CD8-positive, alpha-beta T cell (primary cell): ENCODE measurements at regions of chr9 and their contacts with region 1.

Region 1: GRCh38 chr9:35079426-35080341 is at the start of gene FANCG:
- DNase-seq: peak; percentile 30 to 88 (median 73)
- ATAC-seq: peak; percentile 92
- H3K4me3 ChIP-seq: peak within 1 kb of the TSS; percentile 65 to 81
- H3K4me3 Mint-ChIP-seq: peak within 1 kb of the TSS; percentile 92
- H3K27ac ChIP-seq: peak within 1 kb of the TSS; percentile 42 to 49
- H3K27ac Mint-ChIP-seq: peak within 1 kb of the TSS; percentile 84
- H3K4me1 ChIP-seq: peaks cover 15% of the 10 kb centered on the region
- H3K4me1 Mint-ChIP-seq: peaks cover 21% of the 10 kb centered on the region
- H3K27me3 ChIP-seq: no peaks in the 10 kb centered on the region
- H3K27me3 Mint-ChIP-seq: no peaks in the 10 kb centered on the region
- CTCF ChIP-seq: no peak
- total RNA-seq, gene FANCG: 15.2 to 19.4 TPM

Region 2: GRCh38 chr9:34197756-34198711 is 881.6 kb before region 1 on chr9:
- CTCF ChIA-PET with region 1: no interaction called
- POLR2A ChIA-PET with region 1: no interaction called
- intact Hi-C with region 1: no loop called
- DNase-seq: no peak
- ATAC-seq: peak; percentile 25
- H3K4me3 ChIP-seq: no peak overlapping the region
- H3K4me3 Mint-ChIP-seq: no peak overlapping the region
- H3K27ac ChIP-seq: no peak overlapping the region
- H3K27ac Mint-ChIP-seq: peak overlapping the region; percentile 22
- H3K4me1 ChIP-seq: peaks cover 14% of the 10 kb centered on the region
- H3K4me1 Mint-ChIP-seq: peaks cover 53% of the 10 kb centered on the region
- H3K27me3 ChIP-seq: no peaks in the 10 kb centered on the region
- H3K27me3 Mint-ChIP-seq: no peaks in the 10 kb centered on the region
- CTCF ChIP-seq: no peak

Region 3: DNA sequence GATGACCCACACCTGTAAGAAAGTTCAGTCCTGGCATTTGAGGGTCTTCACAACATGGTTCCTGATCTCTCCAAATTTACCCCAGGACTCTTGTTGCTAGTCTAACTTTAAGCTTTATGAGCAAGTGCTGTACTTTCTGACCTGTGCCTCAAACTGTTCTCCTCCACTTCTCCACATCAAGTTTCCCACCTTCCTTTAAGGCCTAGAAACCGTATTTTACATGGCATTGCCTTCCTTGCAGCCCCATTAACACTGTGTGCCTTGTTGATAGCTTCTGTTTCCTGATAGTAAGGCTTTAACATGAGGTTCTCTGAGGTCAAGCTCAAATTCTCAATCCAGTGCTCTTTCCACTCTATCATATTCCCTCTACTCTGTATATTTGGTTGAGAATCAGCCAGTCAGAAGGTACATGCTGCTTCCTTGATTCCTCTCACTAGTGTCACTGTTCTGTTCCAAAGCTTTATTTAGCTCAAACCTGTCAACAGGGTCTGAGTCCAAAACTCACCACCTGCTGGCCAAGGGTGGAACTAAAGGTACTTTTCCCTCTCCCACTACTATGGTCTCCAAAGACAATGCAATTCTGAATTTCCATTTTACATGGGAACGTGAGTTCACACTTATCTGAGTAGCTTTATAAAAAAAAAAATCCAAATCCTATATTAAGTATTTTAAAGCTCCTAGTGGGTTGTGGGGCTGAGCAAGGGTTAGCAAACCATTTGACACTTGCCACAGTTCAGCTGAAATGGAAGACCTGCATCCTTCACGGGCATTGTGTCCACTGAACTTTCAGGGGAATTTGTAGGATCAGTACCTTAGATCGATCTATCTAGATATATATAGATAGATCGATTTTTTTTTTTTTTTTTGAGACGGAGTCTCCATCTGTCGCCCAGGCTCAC is 28.4 kb before region 1 on chr9:
- CTCF ChIA-PET with region 1: interaction called, 11 read pairs
- POLR2A ChIA-PET with region 1: no interaction called
- intact Hi-C with region 1: no loop called
- DNase-seq: peak in 8 of 9 experiments; percentile 19 to 65 (median 48)
- ATAC-seq: peak; percentile 84
- H3K4me3 ChIP-seq: no peak overlapping the region
- H3K4me3 Mint-ChIP-seq: no peak overlapping the region
- H3K27ac ChIP-seq: no peak overlapping the region
- H3K27ac Mint-ChIP-seq: peak overlapping the region; percentile 15
- H3K4me1 ChIP-seq: no peaks in the 10 kb centered on the region
- H3K4me1 Mint-ChIP-seq: peaks cover 4% of the 10 kb centered on the region
- H3K27me3 ChIP-seq: no peaks in the 10 kb centered on the region
- H3K27me3 Mint-ChIP-seq: no peaks in the 10 kb centered on the region
- CTCF ChIP-seq: peak; percentile 78

Region 4: DNA sequence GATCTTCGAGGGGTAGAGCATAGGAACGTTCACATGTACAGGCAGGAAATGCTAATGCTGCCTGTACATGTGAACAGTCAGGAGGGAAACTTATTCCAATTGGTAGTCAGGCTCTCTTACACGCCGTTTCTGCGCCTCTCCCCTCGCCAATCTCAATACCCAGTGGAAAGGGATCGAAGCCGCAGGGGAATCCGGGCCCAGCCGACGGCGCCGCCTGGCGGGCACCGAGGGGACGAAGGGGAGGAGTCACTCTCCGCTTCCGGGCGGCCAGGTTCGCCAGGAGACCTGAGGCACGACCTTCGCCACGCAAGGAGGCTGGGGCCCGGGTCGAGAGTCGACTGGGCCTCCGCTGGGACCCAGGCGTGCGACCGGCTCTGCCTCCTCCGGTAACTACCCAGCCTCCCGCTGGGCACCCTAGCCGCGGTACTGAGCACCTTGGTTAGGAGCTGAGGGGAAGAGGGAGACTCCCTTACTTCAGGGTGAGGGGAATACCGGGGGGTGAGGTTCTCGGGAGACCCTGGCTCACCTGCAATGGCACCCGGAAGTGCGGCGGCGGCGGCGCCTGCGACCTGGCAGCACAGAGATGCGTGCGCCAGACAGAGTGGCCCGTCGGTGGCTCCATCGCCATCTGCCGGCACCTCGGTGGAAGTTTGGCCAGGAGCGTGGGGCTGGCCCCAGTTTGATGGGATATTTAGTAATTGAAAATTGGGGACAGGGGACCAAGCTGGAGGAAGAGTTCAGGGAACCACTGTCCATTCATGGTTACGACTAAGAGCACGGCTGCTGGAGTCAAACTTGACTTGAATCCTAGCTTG is 16.6 kb after region 1 on chr9 and contains the start of gene PIGO:
- CTCF ChIA-PET with region 1: interaction called, 147 read pairs
- POLR2A ChIA-PET with region 1: interaction called, 23 read pairs
- intact Hi-C with region 1: loop called in 1 of 2 experiments (anchors 1 kb)
- DNase-seq: peak; percentile 78 to 94 (median 89)
- ATAC-seq: peak; percentile 90
- H3K4me3 ChIP-seq: peak within 1 kb of the TSS; percentile 95 to 99
- H3K4me3 Mint-ChIP-seq: peak within 1 kb of the TSS; percentile 88
- H3K27ac ChIP-seq: peak within 1 kb of the TSS; percentile 95 to 100
- H3K27ac Mint-ChIP-seq: peak within 1 kb of the TSS; percentile 95
- H3K4me1 ChIP-seq: peaks cover 24% of the 10 kb centered on the region
- H3K4me1 Mint-ChIP-seq: peaks cover 32% of the 10 kb centered on the region
- H3K27me3 ChIP-seq: no peaks in the 10 kb centered on the region
- H3K27me3 Mint-ChIP-seq: no peaks in the 10 kb centered on the region
- CTCF ChIP-seq: peak; percentile 75
- total RNA-seq, gene PIGO: 15.1 to 16.4 TPM

Region 5: GRCh38 chr9:35102926-35103659 is 23.4 kb after region 1 on chr9 and contains the start of gene STOML2:
- CTCF ChIA-PET with region 1: interaction called, 147 read pairs
- POLR2A ChIA-PET with region 1: interaction called, 23 read pairs
- intact Hi-C with region 1: loop called in 1 of 2 experiments (anchors 1 kb)
- DNase-seq: peak; percentile 83 to 97 (median 93)
- ATAC-seq: peak; percentile 96
- H3K4me3 ChIP-seq: peak within 1 kb of the TSS; percentile 78 to 95
- H3K4me3 Mint-ChIP-seq: peak within 1 kb of the TSS; percentile 89
- H3K27ac ChIP-seq: peak within 1 kb of the TSS; percentile 79 to 92
- H3K27ac Mint-ChIP-seq: peak within 1 kb of the TSS; percentile 90
- H3K4me1 ChIP-seq: peaks cover 14% of the 10 kb centered on the region
- H3K4me1 Mint-ChIP-seq: peaks cover 27% of the 10 kb centered on the region
- H3K27me3 ChIP-seq: no peaks in the 10 kb centered on the region
- H3K27me3 Mint-ChIP-seq: no peaks in the 10 kb centered on the region
- CTCF ChIP-seq: no peak
- total RNA-seq, gene STOML2: 30.5 to 31.3 TPM

Region 6: DNA sequence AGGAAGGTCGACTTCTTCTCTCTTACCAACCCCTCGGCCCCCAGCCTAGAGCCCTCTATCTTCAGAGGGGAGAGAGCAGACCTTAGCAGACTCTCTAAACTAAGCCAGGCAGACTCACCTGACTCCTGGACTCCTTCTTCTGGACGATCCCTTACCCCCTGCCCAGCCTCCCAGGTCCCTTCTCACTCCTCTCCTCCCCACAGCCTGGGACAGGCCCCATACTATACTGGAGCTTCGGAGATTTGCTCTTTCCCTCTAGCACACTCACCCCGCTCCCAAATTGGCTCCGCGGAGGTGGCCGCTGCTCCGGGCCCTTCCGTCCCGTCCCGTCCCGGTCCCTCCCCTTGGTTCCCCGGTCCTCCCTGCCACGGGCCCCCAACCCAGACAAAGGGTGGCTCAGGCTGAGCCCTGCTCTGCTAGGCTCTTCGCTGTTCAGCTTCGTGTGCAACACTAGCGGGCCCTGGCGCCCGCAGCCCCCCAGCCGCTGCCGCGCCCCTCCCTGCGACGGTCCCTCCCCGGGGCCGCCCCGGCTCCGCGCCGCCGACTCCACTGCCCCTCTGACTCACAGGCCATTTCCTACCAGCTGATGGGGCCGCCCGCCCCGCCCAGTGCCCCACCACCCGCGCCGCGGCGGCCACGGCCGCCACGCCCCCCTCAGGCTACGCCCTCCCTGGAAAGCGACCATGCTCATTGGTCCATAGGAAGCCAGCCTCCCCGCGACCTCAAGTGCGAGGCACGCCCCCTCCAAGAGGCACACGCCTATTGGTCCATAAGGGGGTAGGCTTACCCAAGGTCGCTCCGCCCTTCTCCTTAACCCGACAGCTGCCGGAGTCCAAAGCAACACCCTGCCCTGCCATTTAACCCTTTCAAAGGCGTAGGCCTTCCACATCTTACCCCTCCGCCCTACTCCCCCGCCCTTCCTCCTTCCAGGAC is 31.6 kb after region 1 on chr9:
- CTCF ChIA-PET with region 1: interaction called, 4 read pairs
- POLR2A ChIA-PET with region 1: interaction called, 5 read pairs
- intact Hi-C with region 1: loop called in 1 of 2 experiments (anchors 1 kb)
- DNase-seq: peak; percentile 88 to 98 (median 96)
- ATAC-seq: peak; percentile 78
- H3K4me3 ChIP-seq: peak overlapping the region; percentile 64 to 73
- H3K4me3 Mint-ChIP-seq: peak overlapping the region; percentile 82
- H3K27ac ChIP-seq: peak overlapping the region; percentile 39 to 79
- H3K27ac Mint-ChIP-seq: peak overlapping the region; percentile 85
- H3K4me1 ChIP-seq: peaks cover 45% of the 10 kb centered on the region
- H3K4me1 Mint-ChIP-seq: peaks cover 53% of the 10 kb centered on the region
- H3K27me3 ChIP-seq: no peaks in the 10 kb centered on the region
- H3K27me3 Mint-ChIP-seq: no peaks in the 10 kb centered on the region
- CTCF ChIP-seq: no peak